ENCODE measurements at regions of chr11 and their contacts with region 1.

Region 1: DNA sequence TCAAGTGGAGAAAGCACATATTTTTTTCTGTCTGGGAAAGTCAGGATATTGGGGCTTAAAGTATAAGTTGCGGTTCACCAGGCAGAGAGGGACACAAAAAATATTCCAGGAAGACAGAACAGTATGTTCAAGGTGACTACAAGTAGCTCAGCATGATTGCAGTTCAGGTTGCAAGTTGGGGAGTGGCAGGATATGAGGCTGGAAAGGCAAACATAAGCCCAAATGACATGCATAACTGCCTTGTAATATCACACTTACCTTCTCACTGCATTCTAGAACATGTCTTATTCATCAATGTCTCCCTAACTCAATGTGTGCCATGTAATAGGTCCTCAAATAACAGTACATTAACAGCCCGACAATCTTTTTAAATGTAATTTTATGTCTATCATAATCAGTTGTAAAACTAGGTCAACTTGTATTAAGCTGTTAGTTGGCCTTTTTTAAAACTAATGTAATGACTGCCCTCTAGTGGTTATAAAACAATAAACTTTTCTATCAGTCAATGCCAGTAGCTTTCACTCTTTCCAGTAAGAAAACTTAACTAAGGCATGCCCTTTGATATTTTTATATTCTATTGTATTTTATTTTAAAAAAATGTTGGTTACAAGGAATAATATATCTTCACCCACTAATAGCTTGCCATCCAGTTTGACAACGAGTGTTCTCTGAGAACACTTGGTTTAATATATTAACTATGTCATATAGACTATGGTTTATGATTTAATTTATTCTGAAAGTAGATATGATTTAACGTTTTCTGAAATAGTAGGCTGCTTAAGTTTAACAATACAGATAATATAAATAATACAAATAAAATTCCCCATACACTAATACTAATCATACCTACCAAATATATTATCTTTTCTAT is 39.4 kb upstream of the CFAP300 start:
- DNase-seq: peak; percentile 73 to 85
- H3K4me3 ChIP-seq: no peak overlapping the region
- H3K4me3 Mint-ChIP-seq: peak overlapping the region; percentile 39
- H3K27ac Mint-ChIP-seq: peak overlapping the region; percentile 68
- H3K4me1 ChIP-seq: peaks cover 49% of the 10 kb centered on the region
- H3K4me1 Mint-ChIP-seq: peaks cover 38% of the 10 kb centered on the region
- H3K27me3 ChIP-seq: no peaks in the 10 kb centered on the region
- H3K27me3 Mint-ChIP-seq: no peaks in the 10 kb centered on the region
- CTCF ChIP-seq: peak; percentile 53 to 91

Region 2: GRCh38 chr11:101428918-101429317 is 578.9 kb before region 1 on chr11:
- CTCF ChIA-PET with region 1: no interaction called
- POLR2A ChIA-PET with region 1: no interaction called
- intact Hi-C with region 1: loop called (anchors 1 kb)
- DNase-seq: peak in 1 of 2 experiments; percentile 65
- H3K4me3 ChIP-seq: no peak overlapping the region
- H3K4me3 Mint-ChIP-seq: peak overlapping the region; percentile 10
- H3K27ac Mint-ChIP-seq: no peak overlapping the region
- H3K4me1 ChIP-seq: peaks cover 22% of the 10 kb centered on the region
- H3K4me1 Mint-ChIP-seq: peaks cover 23% of the 10 kb centered on the region
- H3K27me3 ChIP-seq: no peaks in the 10 kb centered on the region
- H3K27me3 Mint-ChIP-seq: no peaks in the 10 kb centered on the region
- CTCF ChIP-seq: peak; percentile 74 to 79

Region 3: DNA sequence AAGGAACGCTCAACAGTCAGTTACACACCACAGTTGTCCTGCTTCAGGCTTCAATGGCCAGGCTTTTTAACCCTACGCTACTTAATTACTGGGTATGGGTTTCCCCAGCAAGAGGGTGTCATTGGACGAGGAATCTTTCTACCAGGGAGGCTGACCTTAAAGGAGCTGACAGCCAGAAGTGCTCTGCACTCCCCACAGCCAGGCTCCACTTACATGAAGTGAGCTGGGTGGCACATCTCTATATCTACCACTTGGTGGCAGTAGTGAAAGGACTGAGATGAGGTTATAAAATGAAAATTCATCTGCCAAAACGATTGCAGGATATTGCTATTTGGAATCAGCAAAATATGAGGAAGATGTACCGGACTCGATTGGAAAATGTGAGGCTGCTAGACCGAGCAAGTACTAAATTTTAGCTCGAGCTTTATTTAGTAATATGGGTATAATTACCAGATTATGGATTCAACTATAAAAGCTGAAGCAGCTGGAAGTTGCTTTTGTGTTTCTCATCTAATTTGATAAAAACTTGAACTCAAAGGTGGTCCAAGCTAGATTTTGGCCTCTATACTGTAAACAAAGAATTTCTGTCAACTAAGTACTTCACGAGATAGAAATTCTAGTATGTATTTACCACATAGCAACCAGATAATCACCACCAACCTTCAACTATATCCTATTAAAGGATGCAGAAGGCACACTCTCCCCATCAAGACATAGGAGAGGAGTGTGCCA is 146.9 kb before region 1 on chr11:
- CTCF ChIA-PET with region 1: interaction called, 141 read pairs
- POLR2A ChIA-PET with region 1: interaction called, 4 read pairs
- intact Hi-C with region 1: loop called (anchors 1 kb)
- DNase-seq: peak; percentile 73 to 79
- H3K4me3 ChIP-seq: no peak overlapping the region
- H3K4me3 Mint-ChIP-seq: no peak overlapping the region
- H3K27ac Mint-ChIP-seq: peak overlapping the region; percentile 71
- H3K4me1 ChIP-seq: peaks cover 28% of the 10 kb centered on the region
- H3K4me1 Mint-ChIP-seq: peaks cover 25% of the 10 kb centered on the region
- H3K27me3 ChIP-seq: no peaks in the 10 kb centered on the region
- H3K27me3 Mint-ChIP-seq: no peaks in the 10 kb centered on the region
- CTCF ChIP-seq: peak; percentile 89 to 95

Region 4: GRCh38 chr11:101914738-101915426 is 92.9 kb before region 1 on chr11 and contains the start of gene CEP126:
- CTCF ChIA-PET with region 1: interaction called, 85 read pairs
- POLR2A ChIA-PET with region 1: interaction called, 17 read pairs
- intact Hi-C with region 1: loop called (anchors 1 kb)
- DNase-seq: peak; percentile 97 to 98
- H3K4me3 ChIP-seq: peak within 1 kb of the TSS; percentile 66
- H3K4me3 Mint-ChIP-seq: peak within 1 kb of the TSS; percentile 92
- H3K27ac Mint-ChIP-seq: peak within 1 kb of the TSS; percentile 94
- H3K4me1 ChIP-seq: peaks cover 31% of the 10 kb centered on the region
- H3K4me1 Mint-ChIP-seq: peaks cover 41% of the 10 kb centered on the region
- H3K27me3 ChIP-seq: no peaks in the 10 kb centered on the region
- H3K27me3 Mint-ChIP-seq: no peaks in the 10 kb centered on the region
- CTCF ChIP-seq: peak; percentile 27 to 94
- total RNA-seq, gene CEP126: 4.3 and 4.6 TPM in 2 replicates

Region 5: DNA sequence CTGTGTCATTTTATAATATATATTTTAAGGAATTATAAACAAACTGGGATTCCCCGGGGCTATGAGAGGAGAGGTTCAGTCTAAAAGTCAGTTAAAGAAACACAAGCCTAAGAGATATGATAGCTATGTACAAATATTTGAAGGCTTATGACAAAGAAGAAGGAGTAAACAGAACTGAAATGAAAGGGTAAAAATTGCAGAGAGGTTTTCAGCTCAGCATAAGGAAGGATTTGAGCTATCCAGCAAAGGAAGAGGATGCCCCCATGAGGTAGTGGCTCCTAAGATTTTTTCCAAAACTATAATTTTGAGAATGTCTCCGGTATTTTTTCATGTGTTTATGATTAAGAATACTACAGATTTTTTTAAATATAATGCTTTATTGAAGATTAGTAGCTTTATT is 33.5 kb before region 1 on chr11:
- CTCF ChIA-PET with region 1: interaction called, 51 read pairs
- POLR2A ChIA-PET with region 1: no interaction called
- intact Hi-C with region 1: no loop called
- DNase-seq: peak in 1 of 2 experiments; percentile 65
- H3K4me3 ChIP-seq: no peak overlapping the region
- H3K4me3 Mint-ChIP-seq: peak overlapping the region; percentile 45
- H3K27ac Mint-ChIP-seq: peak overlapping the region; percentile 43
- H3K4me1 ChIP-seq: peaks cover 22% of the 10 kb centered on the region
- H3K4me1 Mint-ChIP-seq: peaks cover 14% of the 10 kb centered on the region
- H3K27me3 ChIP-seq: no peaks in the 10 kb centered on the region
- H3K27me3 Mint-ChIP-seq: no peaks in the 10 kb centered on the region
- CTCF ChIP-seq: peak; percentile 39 to 72

Region 6: GRCh38 chr11:102047305-102047924 is 39.6 kb after region 1 on chr11 and contains the start of gene CFAP300:
- CTCF ChIA-PET with region 1: no interaction called
- POLR2A ChIA-PET with region 1: no interaction called
- intact Hi-C with region 1: loop called (anchors 1 kb)
- DNase-seq: peak; percentile 92 to 94
- H3K4me3 ChIP-seq: peak within 1 kb of the TSS; percentile 66
- H3K4me3 Mint-ChIP-seq: peak within 1 kb of the TSS; percentile 93
- H3K27ac Mint-ChIP-seq: peak within 1 kb of the TSS; percentile 95
- H3K4me1 ChIP-seq: no peaks in the 10 kb centered on the region
- H3K4me1 Mint-ChIP-seq: peaks cover 12% of the 10 kb centered on the region
- H3K27me3 ChIP-seq: no peaks in the 10 kb centered on the region
- H3K27me3 Mint-ChIP-seq: no peaks in the 10 kb centered on the region
- CTCF ChIP-seq: no peak
- total RNA-seq, gene CFAP300: 2.2 and 3.9 TPM in 2 replicates

Region 7: GRCh38 chr11:102192349-102193066 is 184.7 kb after region 1 on chr11:
- CTCF ChIA-PET with region 1: interaction called, 4 read pairs
- POLR2A ChIA-PET with region 1: no interaction called
- intact Hi-C with region 1: loop called (anchors 1 kb)
- DNase-seq: peak; percentile 92 to 93
- H3K4me3 ChIP-seq: no peak overlapping the region
- H3K4me3 Mint-ChIP-seq: peak overlapping the region; percentile 20
- H3K27ac Mint-ChIP-seq: peak overlapping the region; percentile 25
- H3K4me1 ChIP-seq: peaks cover 71% of the 10 kb centered on the region
- H3K4me1 Mint-ChIP-seq: peaks cover 56% of the 10 kb centered on the region
- H3K27me3 ChIP-seq: no peaks in the 10 kb centered on the region
- H3K27me3 Mint-ChIP-seq: no peaks in the 10 kb centered on the region
- CTCF ChIP-seq: no peak